Posterior cingulate gyrus (tissue), 11 donors: ENCODE measurements at regions of chr17 and their contacts with region 1.

Region 1: GRCh38 chr17:77247048-77247541 is 106.3 kb downstream of the SEC14L1 start:
- DNase-seq: peak; percentile 63 to 98 (median 84)

Region 2: DNA sequence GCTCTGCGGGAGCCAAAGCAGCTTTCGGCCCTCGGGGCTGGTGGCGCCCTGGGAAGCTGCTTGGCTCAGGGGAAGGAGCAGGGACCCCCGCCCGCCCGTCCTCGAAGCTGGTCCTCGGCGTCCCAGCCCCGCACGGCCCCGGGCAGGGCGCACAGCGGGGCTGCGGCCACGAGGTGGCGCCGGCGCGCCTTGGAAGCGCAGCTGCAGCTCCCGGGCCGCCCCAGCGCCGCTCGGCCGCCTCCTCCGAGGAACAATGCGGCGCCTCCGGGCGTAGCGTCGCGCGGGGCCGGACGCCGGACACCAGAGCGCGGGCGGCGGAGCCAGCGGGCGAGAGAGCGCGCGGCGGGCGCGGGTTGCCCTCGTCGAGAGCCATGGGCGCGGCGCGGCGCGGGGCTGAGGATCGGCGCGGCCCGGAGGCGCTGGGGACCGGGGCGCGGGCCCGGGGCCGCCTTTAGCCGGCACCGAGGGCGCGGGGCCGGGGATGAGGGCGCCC is 378.9 kb before region 1 on chr17 and contains the start of gene MGAT5B:
- intact Hi-C with region 1: loop called (anchors 10 kb)
- DNase-seq: peak; percentile 51 to 96 (median 76)

Region 3: GRCh38 chr17:77088455-77089123 is 158.5 kb before region 1 on chr17:
- intact Hi-C with region 1: loop called (anchors 1 kb)
- DNase-seq: peak; percentile 85 to 98 (median 93)

Region 4: GRCh38 chr17:77164483-77165091 is 82.5 kb before region 1 on chr17:
- intact Hi-C with region 1: no loop called
- DNase-seq: no peak

Region 5: DNA sequence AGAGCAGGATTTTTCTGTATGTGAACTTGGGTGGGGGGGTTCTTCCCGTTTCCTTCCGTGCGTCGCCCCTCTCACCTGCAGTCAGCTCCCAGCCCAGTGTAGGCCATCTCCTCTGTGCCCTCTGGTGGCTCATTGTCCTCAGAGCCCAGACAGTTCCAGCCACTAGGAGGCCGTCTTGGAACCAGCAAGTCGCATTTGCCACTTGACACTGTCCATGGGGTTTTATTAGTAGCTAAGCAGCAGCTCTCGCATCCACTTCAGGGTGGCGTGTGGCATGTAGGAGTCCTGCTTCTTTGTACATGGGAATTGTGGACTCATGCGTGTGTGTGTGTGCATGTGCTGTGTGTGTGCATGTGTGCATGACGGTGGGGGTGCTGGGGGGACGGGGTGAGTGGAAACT is 32.4 kb before region 1 on chr17:
- intact Hi-C with region 1: loop called (anchors 1 kb)
- DNase-seq: peak in 7 of 10 donors; percentile 50 to 95 (median 61)

Region 6: GRCh38 chr17:77280980-77281903 is 34.1 kb after region 1 on chr17:
- intact Hi-C with region 1: no loop called
- DNase-seq: peak in 3 of 10 donors; percentile 41 to 88 (median 88)